ENCODE measurements at regions of chr7 and their contacts with region 1.

Region 1: DNA sequence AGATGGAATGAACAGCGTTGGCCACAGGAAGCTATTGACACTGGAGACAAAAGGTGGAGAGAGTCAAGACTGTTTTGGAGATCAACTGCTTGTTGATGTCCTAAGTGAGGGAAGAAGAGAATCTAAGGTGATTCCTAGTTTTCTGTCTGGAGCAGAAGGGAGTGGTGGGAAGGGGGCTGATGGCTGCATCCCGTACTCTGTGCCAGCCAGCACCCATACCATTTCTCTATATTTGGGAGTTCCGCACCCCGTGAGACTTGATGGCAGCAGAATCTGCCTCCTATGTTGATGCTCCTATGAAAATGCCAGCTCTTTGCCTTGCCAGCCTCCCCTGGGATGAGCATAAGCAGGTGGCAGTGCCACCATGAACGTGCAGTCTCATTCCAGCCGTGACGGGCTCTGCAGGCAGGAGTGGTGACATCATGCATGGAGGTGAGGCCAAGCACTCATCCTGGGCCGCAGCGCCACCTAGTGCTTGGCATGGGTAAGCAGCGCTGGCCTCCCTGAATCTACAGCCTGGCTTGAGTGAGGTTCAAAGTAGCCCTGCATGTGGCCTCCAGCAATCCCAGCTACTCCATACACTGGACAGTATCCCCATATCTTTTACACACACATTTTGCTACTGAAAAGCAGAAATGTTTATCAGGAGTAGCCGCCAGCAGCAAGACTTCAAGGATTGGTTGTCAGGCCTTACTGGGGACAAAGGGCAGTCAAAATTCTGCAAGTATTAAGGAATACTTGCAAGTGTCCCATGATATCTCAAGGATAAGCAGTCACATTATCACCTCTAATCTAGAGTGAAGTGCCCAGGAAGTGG is 43.0 kb downstream of the PODXL start:
- DNase-seq: peak; percentile 89

Region 2: DNA sequence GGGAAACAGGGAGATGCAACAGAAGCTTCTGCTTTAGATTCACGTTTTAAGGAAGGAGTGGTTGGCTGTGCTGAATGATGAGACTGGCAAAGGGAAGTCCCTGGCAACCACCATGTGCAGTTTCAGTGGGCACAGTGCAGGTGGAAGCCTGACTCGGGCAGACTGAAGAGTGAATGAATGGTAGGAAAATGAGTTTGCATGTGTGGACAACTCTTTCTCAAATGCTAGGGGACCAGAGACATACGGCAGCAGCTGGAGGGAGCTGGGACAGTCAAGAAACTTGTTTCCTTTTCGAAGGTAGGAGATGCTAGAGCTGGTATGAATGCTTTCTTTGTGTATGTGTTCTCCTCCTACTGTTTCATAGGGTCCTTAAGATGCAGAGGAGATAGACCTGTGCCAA is 14.0 kb after region 1 on chr7:
- CTCF ChIA-PET with region 1: no interaction called
- POLR2A ChIA-PET with region 1: no interaction called
- DNase-seq: no peak

Region 3: DNA sequence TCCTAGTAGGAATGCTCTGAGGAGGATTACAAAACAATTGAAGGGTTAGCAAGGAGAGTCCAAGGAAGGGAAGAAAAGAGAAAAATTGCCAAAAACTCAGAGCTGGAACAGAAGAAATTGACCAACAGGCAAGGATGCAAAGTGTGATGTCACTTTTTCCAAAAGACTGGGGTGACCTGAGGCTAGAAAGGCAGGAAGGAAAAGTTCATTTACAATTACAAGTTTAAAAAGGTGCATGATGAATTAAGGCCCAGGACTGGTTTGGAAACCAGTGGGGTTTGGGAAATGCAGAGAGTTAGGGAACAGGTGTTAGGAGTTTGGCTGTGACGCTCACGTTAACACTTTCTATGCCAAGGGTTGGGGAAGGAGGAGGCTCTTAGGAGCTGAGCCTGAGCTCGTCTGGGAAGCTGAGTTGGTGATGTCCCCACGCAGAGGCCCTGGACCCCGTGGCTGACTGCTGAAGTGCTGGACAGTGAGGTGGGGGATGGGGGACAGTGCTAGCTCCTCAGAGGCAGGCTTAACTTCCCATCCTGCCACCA is 135.6 kb after region 1 on chr7:
- CTCF ChIA-PET with region 1: interaction called, 11 read pairs
- POLR2A ChIA-PET with region 1: no interaction called
- DNase-seq: no peak

Measured in HEK293T (cell line).